Activated CD4-positive, alpha-beta memory T cell treated with anti-CD3 and anti-CD28 coated beads for 36 hours (primary cell): ENCODE measurements at regions of chr16 and their contacts with region 1.

Region 1: DNA sequence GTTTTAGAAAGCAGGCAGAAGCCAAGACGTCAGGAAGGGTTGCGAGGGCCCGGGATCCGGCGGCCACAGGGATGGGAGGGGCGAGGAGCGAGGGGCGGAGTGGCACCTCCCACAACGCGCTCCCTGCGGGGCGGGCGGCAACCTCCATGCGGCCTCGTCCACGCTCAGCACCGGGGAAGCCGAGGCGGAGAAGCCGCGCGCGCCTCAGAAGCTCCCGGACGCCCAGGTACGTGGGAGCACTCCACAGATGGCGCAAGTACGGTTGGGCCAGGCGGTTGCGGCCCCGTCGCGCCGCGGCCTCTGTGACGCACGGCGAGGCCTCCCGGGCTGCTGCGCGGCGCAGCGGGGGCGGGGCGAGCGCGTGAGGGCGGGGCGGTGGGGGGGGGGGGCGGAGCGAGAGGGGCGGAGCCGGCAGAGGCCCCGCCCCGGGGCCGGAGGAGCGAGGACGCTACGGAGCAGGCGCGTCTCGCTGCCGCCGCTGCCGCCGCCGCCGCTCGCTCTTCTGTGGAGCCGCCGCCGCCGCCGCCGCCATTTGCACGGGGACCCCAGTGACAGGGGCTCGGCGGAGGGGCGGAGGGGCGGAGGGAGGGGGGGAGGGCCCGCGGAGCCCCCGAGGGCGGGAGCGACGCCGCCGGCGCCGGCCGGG is at the start of gene TENT4B:
- DNase-seq: peak; percentile 90
- H3K4me3 Mint-ChIP-seq: peak within 1 kb of the TSS; percentile 80
- H3K27ac Mint-ChIP-seq: peak within 1 kb of the TSS; percentile 91
- H3K4me1 Mint-ChIP-seq: peaks cover 32% of the 10 kb centered on the region
- H3K27me3 Mint-ChIP-seq: no peaks in the 10 kb centered on the region
- total RNA-seq, gene TENT4B: 14.4 to 14.8 TPM

Region 2: GRCh38 chr16:50121721-50122445 is 31.0 kb before region 1 on chr16:
- CTCF ChIA-PET with region 1: no interaction called
- POLR2A ChIA-PET with region 1: interaction called, 4 read pairs
- intact Hi-C with region 1: loop called (anchors 1 kb)
- DNase-seq: peak; percentile 81
- H3K4me3 Mint-ChIP-seq: no peak overlapping the region
- H3K27ac Mint-ChIP-seq: peak overlapping the region; percentile 10
- H3K4me1 Mint-ChIP-seq: peaks cover 15% of the 10 kb centered on the region
- H3K27me3 Mint-ChIP-seq: no peaks in the 10 kb centered on the region

Region 3: DNA sequence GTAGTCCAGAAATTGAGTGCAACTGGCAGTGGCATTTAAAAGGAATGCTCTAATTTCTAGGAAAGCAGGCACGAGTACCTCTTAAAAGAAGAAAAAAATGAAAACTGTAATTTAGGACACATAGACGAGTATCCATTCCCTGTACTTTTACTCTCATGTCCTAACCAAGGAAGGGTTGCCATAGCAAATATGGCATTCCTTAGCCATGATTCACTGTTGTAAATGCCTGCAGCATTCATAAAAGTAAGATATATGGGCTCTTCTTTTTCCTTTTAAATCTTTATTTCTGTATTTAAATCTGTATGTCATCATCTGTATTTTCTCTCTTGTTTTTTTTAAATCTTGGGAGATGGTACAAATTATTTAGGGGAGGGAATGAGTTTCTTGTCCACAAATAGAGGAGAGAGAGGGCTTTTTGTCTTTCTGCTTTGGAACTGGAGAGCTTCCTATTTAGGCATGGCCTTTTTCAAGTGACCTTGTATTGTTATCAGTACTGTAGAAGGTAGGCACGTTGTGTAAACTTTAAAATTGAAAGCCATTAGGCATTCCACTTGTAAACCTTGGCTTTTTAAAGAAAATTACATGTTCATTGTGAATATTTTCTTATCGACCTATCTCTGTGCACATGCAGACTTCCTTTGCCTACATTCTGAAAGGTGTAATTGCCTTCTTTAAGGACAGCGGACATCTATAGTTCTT is 50.1 kb after region 1 on chr16:
- CTCF ChIA-PET with region 1: no interaction called
- POLR2A ChIA-PET with region 1: no interaction called
- intact Hi-C with region 1: loop called (anchors 5 kb)
- DNase-seq: no peak
- H3K4me3 Mint-ChIP-seq: no peak overlapping the region
- H3K27ac Mint-ChIP-seq: no peak overlapping the region
- H3K4me1 Mint-ChIP-seq: peaks cover 43% of the 10 kb centered on the region
- H3K27me3 Mint-ChIP-seq: no peaks in the 10 kb centered on the region

Region 4: GRCh38 chr16:50681021-50681885 is 528.3 kb after region 1 on chr16 and contains the start of gene SNX20:
- CTCF ChIA-PET with region 1: no interaction called
- POLR2A ChIA-PET with region 1: no interaction called
- intact Hi-C with region 1: loop called (anchors 5 kb)
- DNase-seq: peak; percentile 79
- H3K4me3 Mint-ChIP-seq: peak within 1 kb of the TSS; percentile 89
- H3K27ac Mint-ChIP-seq: peak within 1 kb of the TSS; percentile 91
- H3K4me1 Mint-ChIP-seq: peaks cover 85% of the 10 kb centered on the region
- H3K27me3 Mint-ChIP-seq: no peaks in the 10 kb centered on the region
- total RNA-seq, gene SNX20: 55.4 to 56.9 TPM